ENCODE measurements at regions of chr7 and their contacts with region 1.

Region 1: GRCh38 chr7:44885394-44886317 is at the start of gene PURB:
- DNase-seq: peak; percentile 97
- ATAC-seq: peak; percentile 94
- H3K4me3 Mint-ChIP-seq: peak within 1 kb of the TSS; percentile 96
- H3K27ac Mint-ChIP-seq: peak within 1 kb of the TSS; percentile 98
- H3K4me1 Mint-ChIP-seq: peaks cover 51% of the 10 kb centered on the region
- H3K27me3 Mint-ChIP-seq: no peaks in the 10 kb centered on the region
- CTCF ChIP-seq: no peak
- total RNA-seq, gene PURB: 20.5 to 21.0 TPM

Region 2: DNA sequence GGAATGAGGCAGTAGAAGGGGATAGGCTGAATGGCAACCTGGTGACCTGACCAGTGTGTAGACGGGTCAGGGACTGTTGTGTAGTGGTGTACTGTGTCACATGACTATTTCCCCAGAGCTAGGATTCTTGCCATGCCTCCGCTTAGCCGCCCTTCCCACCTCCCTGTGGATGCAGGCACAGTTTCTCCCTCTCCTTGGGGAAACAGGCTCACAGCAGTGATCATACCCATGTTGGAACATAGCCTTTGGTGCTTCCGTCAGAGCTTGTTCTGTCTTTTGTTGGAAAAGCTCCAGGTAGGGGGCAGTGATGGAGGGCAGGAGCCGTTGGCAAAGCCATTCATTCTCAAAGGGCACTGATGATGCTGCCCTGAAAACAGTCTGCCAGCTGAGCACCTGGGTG is 234.9 kb before region 1 on chr7:
- CTCF ChIA-PET with region 1: no interaction called
- POLR2A ChIA-PET with region 1: no interaction called
- intact Hi-C with region 1: no loop called
- DNase-seq: no peak
- ATAC-seq: no peak
- H3K4me3 Mint-ChIP-seq: no peak overlapping the region
- H3K27ac Mint-ChIP-seq: no peak overlapping the region
- H3K4me1 Mint-ChIP-seq: peaks cover 2% of the 10 kb centered on the region
- H3K27me3 Mint-ChIP-seq: no peaks in the 10 kb centered on the region
- CTCF ChIP-seq: no peak

Region 3: GRCh38 chr7:44847508-44847920 is 38.1 kb before region 1 on chr7:
- CTCF ChIA-PET with region 1: interaction called, 5 read pairs
- POLR2A ChIA-PET with region 1: interaction called, 49 read pairs
- intact Hi-C with region 1: loop called (anchors 5 kb)
- DNase-seq: peak; percentile 88
- ATAC-seq: peak; percentile 69
- H3K4me3 Mint-ChIP-seq: peak overlapping the region; percentile 92
- H3K27ac Mint-ChIP-seq: peak overlapping the region; percentile 100
- H3K4me1 Mint-ChIP-seq: peaks cover 36% of the 10 kb centered on the region
- H3K27me3 Mint-ChIP-seq: no peaks in the 10 kb centered on the region
- CTCF ChIP-seq: peak; percentile 85

Region 4: GRCh38 chr7:44914992-44915607 is 29.4 kb after region 1 on chr7:
- CTCF ChIA-PET with region 1: interaction called, 8 read pairs
- POLR2A ChIA-PET with region 1: interaction called, 15 read pairs
- intact Hi-C with region 1: loop called (anchors 5 kb)
- DNase-seq: peak; percentile 89
- ATAC-seq: peak; percentile 96
- H3K4me3 Mint-ChIP-seq: no peak overlapping the region
- H3K27ac Mint-ChIP-seq: peak overlapping the region; percentile 75
- H3K4me1 Mint-ChIP-seq: peaks cover 25% of the 10 kb centered on the region
- H3K27me3 Mint-ChIP-seq: no peaks in the 10 kb centered on the region
- CTCF ChIP-seq: no peak

Region 5: GRCh38 chr7:44921607-44922359 is 36.1 kb after region 1 on chr7:
- CTCF ChIA-PET with region 1: interaction called, 10 read pairs
- POLR2A ChIA-PET with region 1: interaction called, 15 read pairs
- intact Hi-C with region 1: loop called (anchors 5 kb)
- DNase-seq: peak; percentile 99
- ATAC-seq: peak; percentile 99
- H3K4me3 Mint-ChIP-seq: no peak overlapping the region
- H3K27ac Mint-ChIP-seq: peak overlapping the region; percentile 63
- H3K4me1 Mint-ChIP-seq: peaks cover 16% of the 10 kb centered on the region
- H3K27me3 Mint-ChIP-seq: peaks cover under 1% of the 10 kb centered on the region
- CTCF ChIP-seq: peak; percentile 88

Region 6: DNA sequence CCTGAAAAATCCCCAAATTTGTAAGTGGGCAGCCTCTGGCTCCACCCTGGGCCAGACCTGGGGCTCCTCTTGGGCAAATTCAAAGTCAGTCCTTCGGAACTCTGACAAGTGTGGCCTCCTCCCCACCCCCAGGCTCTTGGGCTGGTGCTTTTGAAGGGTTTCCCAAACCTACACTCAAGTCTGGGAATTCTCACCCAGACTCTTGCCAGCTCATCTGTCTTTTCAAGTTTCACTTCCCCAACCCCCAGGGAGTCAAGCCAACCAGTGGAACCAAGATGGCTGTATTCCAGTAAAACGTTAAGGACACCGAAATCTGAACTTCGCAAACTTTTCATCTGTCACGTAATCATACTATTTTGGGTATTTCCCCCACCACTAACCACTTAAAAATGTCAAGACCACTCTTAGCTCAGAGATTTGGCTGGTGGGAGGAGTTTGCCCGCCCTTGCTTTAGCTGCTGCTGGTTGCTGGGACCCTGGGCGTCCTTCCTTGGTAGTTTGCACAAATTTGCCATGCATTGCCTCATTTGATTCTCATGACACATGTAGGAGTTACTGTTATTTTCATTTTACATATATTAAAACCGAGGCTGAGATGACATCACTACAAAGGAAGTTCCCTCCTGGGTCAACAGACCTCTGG is 94.9 kb after region 1 on chr7:
- CTCF ChIA-PET with region 1: no interaction called
- POLR2A ChIA-PET with region 1: interaction called, 12 read pairs
- intact Hi-C with region 1: no loop called
- DNase-seq: peak; percentile 97
- ATAC-seq: peak; percentile 52
- H3K4me3 Mint-ChIP-seq: peak overlapping the region; percentile 100
- H3K27ac Mint-ChIP-seq: peak overlapping the region; percentile 100
- H3K4me1 Mint-ChIP-seq: peaks cover 60% of the 10 kb centered on the region
- H3K27me3 Mint-ChIP-seq: no peaks in the 10 kb centered on the region
- CTCF ChIP-seq: no peak

Region 7: DNA sequence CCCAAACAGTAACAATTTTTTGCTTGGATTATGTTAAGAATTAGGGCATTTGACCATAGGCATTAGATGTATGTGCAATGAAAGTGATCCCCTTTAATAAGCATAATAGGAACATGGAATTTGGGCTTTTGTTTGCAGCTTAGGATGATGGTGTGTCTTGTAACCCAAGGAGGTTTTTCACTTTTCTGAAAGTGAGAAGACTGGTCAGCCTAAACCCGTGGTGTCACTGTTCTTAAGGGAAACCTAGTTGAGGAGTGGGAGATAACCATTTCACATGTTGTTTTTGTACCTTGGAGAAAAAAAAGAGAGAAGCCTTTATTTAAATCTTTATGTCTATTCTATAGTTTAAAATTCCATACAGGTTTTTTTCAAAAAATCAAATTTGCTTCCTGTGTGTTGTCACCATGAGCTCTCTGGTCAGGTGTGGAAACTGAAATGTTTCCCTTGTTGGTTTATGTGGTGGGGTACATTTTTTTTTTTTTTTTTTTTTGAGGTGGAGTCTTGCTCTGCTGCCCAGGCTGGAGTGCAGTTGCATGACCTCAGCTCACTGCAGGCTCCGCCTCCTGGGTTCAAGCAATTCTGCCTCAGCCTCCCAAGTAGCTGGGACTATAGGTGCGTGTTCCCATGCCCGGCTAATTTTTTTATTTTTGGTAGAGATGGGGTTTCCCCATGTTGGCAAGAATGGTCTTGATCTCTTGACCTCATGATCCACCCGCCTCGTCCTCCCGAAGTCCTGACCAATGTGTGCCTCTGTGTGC is 122.1 kb after region 1 on chr7:
- CTCF ChIA-PET with region 1: no interaction called
- POLR2A ChIA-PET with region 1: no interaction called
- intact Hi-C with region 1: no loop called
- DNase-seq: peak; percentile 27
- ATAC-seq: peak; percentile 66
- H3K4me3 Mint-ChIP-seq: no peak overlapping the region
- H3K27ac Mint-ChIP-seq: peak overlapping the region; percentile 40
- H3K4me1 Mint-ChIP-seq: peaks cover 60% of the 10 kb centered on the region
- H3K27me3 Mint-ChIP-seq: no peaks in the 10 kb centered on the region
- CTCF ChIP-seq: no peak